Activated CD4-positive, alpha-beta T cell treated with anti-CD3 and anti-CD28 coated beads for 36 hours (primary cell): ENCODE measurements at regions of chr12 and their contacts with region 1.

Region 1: GRCh38 chr12:29103539-29103974 is 45.5 kb upstream of the FAR2 start:
- DNase-seq: peak; percentile 59
- ATAC-seq: peak; percentile 92
- H3K4me3 Mint-ChIP-seq: peak overlapping the region; percentile 11
- H3K27ac Mint-ChIP-seq: peak overlapping the region; percentile 28
- H3K4me1 Mint-ChIP-seq: peaks cover 34% of the 10 kb centered on the region
- H3K27me3 Mint-ChIP-seq: peaks cover 7% of the 10 kb centered on the region

Region 2: GRCh38 chr12:28223025-28223554 is 880.5 kb before region 1 on chr12:
- CTCF ChIA-PET with region 1: no interaction called
- POLR2A ChIA-PET with region 1: no interaction called
- intact Hi-C with region 1: loop called in 1 of 2 experiments (anchors 10 kb)
- DNase-seq: peak; percentile 25
- ATAC-seq: peak; percentile 94
- H3K4me3 Mint-ChIP-seq: peak overlapping the region; percentile 29
- H3K27ac Mint-ChIP-seq: peak overlapping the region; percentile 77
- H3K4me1 Mint-ChIP-seq: peaks cover 48% of the 10 kb centered on the region
- H3K27me3 Mint-ChIP-seq: no peaks in the 10 kb centered on the region

Region 3: DNA sequence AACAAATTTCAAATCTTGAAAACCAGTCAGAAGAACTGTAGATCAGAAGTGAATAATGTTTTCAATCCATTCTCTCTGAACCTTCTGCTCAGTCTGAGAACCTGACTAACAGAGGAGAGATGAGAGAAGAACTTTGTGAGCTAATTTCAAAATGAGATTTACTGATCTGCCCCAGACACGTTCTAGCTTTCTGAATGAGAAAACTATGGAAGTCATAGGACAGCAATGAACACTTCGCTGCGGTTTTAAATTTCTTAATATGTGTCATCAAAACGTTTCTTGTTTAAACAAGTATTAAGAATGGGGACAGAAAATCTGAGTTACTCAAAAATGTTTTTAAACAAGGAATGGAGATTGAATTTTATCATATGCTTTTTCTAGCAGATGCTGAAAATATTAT is 21.0 kb before region 1 on chr12:
- CTCF ChIA-PET with region 1: interaction called, 23 read pairs
- POLR2A ChIA-PET with region 1: no interaction called
- intact Hi-C with region 1: loop called (anchors 1 kb)
- DNase-seq: no peak
- ATAC-seq: peak; percentile 99
- H3K4me3 Mint-ChIP-seq: no peak overlapping the region
- H3K27ac Mint-ChIP-seq: no peak overlapping the region
- H3K4me1 Mint-ChIP-seq: peaks cover 11% of the 10 kb centered on the region
- H3K27me3 Mint-ChIP-seq: peaks cover 10% of the 10 kb centered on the region

Region 4: GRCh38 chr12:29148911-29149690 is 45.5 kb after region 1 on chr12 and contains the start of gene FAR2:
- CTCF ChIA-PET with region 1: no interaction called
- POLR2A ChIA-PET with region 1: no interaction called
- intact Hi-C with region 1: loop called (anchors 1 to 2 kb)
- DNase-seq: peak; percentile 59
- ATAC-seq: peak; percentile 77
- H3K4me3 Mint-ChIP-seq: peak within 1 kb of the TSS; percentile 81
- H3K27ac Mint-ChIP-seq: peak within 1 kb of the TSS; percentile 85
- H3K4me1 Mint-ChIP-seq: peaks cover 16% of the 10 kb centered on the region
- H3K27me3 Mint-ChIP-seq: peaks cover 14% of the 10 kb centered on the region
- total RNA-seq, gene FAR2: 7.8 to 8.1 TPM

Region 5: GRCh38 chr12:29380536-29381523 is 277.3 kb after region 1 on chr12 and contains the start of gene ERGIC2:
- CTCF ChIA-PET with region 1: interaction called, 4 read pairs
- POLR2A ChIA-PET with region 1: no interaction called
- intact Hi-C with region 1: loop called in 1 of 2 experiments (anchors 2 kb)
- DNase-seq: peak; percentile 93
- ATAC-seq: peak; percentile 95
- H3K4me3 Mint-ChIP-seq: peak within 1 kb of the TSS; percentile 92
- H3K27ac Mint-ChIP-seq: peak within 1 kb of the TSS; percentile 93
- H3K4me1 Mint-ChIP-seq: peaks cover 42% of the 10 kb centered on the region
- H3K27me3 Mint-ChIP-seq: no peaks in the 10 kb centered on the region
- total RNA-seq, gene ERGIC2: 104 to 151 TPM

Region 6: GRCh38 chr12:29818916-29819623 is 715.5 kb after region 1 on chr12:
- CTCF ChIA-PET with region 1: no interaction called
- POLR2A ChIA-PET with region 1: no interaction called
- intact Hi-C with region 1: no loop called
- DNase-seq: no peak
- ATAC-seq: no peak
- H3K4me3 Mint-ChIP-seq: no peak overlapping the region
- H3K27ac Mint-ChIP-seq: no peak overlapping the region
- H3K4me1 Mint-ChIP-seq: no peaks in the 10 kb centered on the region
- H3K27me3 Mint-ChIP-seq: no peaks in the 10 kb centered on the region